Common myeloid progenitor, CD34-positive (primary cell): ENCODE measurements at regions of chr21 and their contacts with region 1.

Region 1: DNA sequence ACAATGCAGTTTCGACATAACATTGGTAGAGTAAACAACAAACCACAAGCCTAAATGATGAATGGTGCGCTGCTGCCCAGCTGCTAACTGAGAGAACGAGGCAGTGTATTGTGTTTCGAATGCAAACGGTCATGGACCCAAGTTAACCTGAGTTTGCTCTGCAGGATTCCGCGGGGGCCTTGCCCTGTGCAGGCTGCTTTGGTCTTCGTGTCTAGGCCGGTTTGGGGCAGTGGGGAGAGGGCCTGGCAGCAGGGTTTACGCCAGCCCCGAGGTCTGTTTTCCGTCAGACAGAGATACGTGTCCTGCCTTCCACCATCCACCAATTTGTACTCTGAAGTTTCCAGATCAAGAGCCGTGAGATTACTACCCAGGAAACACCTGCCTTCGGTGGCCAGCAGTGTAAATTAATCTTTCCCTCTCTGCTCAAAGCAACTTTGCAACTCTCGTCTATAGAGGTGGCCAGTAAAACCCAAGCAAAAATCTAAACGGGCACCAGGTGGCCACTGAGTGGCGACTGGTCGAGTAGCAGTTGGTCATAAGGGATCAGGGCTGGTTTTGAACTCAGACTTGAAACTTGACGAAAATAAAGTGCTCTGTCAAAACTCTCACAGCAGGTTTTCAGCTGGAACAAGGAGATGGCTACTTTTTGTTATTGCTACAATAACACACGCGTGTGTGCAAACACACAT is 6.3 kb upstream of the PRDM15 start:
- DNase-seq: peak; percentile 36 to 86 (median 75)
- H3K4me3 ChIP-seq: no peak overlapping the region
- H3K27ac ChIP-seq: peak overlapping the region; percentile 18 to 33
- H3K4me1 ChIP-seq: peaks cover 8 to 32% (median 22%) of the 10 kb centered on the region in 4 experiments
- H3K27me3 ChIP-seq: no peaks in the 10 kb centered on the region

Region 2: DNA sequence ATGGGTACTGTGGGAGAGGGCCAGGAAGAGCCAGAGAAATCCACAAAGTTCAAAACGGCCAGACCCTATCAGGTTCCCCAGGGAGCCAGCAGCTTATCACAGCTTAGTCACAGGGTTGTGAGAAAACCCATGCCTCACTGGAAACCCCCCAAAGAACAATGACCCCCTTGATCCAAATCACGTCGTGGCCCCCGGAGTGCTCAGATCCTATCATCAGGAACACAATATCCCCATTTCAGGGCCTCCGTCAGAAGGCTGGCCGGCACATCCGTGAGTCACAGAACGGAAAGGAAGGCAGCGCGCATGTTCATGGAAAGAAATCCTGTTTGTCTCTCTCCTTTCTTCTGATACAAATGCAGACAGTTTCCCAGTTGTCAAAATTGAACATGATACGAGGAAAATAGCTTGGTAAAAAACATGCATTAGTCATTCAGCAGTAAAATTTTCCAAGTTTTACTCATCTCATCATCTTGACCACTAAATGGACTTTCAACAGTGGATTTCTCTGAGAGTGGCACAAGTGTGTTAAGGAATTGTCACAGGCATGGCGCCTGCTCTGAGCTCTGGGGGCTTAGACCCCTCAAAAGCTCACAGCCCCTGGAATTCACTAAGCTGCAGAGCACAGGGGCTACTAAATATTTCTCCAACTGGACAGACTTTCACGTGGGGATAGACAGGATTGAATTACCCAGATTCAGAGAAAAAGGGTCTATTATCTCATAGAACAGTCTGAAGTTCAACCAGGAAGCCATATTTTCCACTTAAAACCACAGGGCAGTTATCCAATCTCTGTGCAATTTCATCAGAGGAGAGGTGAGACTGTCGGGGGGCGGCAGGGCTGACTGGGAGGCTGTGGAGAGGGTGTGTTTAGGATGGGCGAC is 243.4 kb before region 1 on chr21:
- CTCF ChIA-PET with region 1: no interaction called
- POLR2A ChIA-PET with region 1: no interaction called
- DNase-seq: peak in 1 of 3 donors; percentile 22
- H3K4me3 ChIP-seq: peak overlapping the region in 1 of 7 experiments; percentile 27
- H3K27ac ChIP-seq: no peak overlapping the region
- H3K4me1 ChIP-seq: peaks cover 0 to 10% (median 2%) of the 10 kb centered on the region in 4 experiments
- H3K27me3 ChIP-seq: peaks cover 0 to 12% (median 0%) of the 10 kb centered on the region in 5 experiments

Region 3: GRCh38 chr21:41895643-41896493 is 10.4 kb after region 1 on chr21:
- CTCF ChIA-PET with region 1: interaction called, 16 read pairs
- POLR2A ChIA-PET with region 1: interaction called, 5 read pairs
- DNase-seq: peak; percentile 40 to 92 (median 89)
- H3K4me3 ChIP-seq: peak overlapping the region in 2 of 7 experiments; percentile 6 to 22
- H3K27ac ChIP-seq: peak overlapping the region in 1 of 2 experiments; percentile 14
- H3K4me1 ChIP-seq: peaks cover 12 to 50% (median 37%) of the 10 kb centered on the region in 4 experiments
- H3K27me3 ChIP-seq: no peaks in the 10 kb centered on the region